ENCODE measurements at regions of chr1 and their contacts with region 1.

Region 1: DNA sequence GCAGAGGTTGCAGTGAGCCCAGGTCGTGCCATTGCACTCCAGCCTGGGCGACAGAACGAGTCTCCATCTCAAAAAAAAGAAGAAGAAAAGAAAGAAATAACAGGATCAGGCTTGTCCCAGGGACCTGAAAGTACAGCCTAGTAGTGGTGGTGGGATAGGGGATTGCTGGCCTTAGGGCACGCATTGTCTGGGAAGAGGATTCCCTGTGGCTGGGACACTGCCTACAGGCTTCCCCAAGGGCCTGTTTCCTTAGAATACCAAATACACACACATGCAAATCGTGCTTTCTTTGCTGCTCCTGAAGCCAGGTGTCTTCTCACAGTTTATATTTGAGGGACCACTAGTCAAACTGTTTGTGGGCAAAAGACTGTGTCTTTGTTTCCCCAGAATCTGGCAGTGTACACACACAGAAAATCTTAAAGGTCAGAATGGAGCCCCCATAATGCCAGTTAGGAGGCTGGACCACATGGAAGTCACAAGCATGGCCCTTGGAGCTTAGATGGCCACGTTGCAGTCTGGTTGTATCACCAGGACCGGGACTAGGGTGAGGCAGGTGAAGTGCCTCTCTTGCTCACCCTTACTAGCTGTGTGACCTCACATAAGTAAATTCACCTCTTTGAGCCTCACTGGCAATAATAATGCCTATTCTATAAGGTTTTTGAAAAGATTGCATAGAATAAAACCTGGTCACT is 12.7 kb upstream of the ASAP3 start:
- H3K4me3 Mint-ChIP-seq: no peak overlapping the region
- H3K27ac Mint-ChIP-seq: no peak overlapping the region
- H3K4me1 Mint-ChIP-seq: peaks cover 6% of the 10 kb centered on the region
- H3K27me3 Mint-ChIP-seq: peaks cover 29% of the 10 kb centered on the region

Region 2: DNA sequence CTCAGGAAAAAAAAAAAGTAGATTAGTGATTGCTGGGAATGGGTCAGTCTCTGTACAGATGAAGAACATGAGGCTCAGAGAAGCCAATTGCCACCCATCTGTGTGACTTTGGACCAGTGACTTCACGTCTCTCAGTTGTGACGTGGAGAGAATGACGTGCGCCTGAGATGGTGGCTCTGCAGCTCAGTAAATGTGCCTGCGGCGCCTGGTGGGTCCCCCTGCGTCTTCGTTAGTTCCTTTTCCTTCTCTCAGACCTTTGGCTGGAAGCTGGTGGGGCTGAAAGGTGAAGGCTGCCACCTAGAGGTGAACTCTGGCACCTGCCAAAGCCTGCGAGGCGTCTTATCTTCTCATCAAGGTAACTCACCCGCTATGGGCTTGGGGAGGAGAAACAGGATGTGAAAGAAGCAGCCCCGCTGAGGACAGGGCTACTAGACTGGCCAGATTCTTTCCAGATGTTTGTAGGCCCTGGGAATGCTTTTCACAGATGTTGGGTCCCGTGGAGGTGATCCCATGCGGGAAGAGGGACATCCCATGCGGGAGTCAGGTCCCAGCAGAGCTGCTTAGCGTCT is 43.1 kb after region 1 on chr1:
- intact Hi-C with region 1: loop called (anchors 1 kb)
- H3K4me3 Mint-ChIP-seq: no peak overlapping the region
- H3K27ac Mint-ChIP-seq: no peak overlapping the region
- H3K4me1 Mint-ChIP-seq: peaks cover 31% of the 10 kb centered on the region
- H3K27me3 Mint-ChIP-seq: peaks cover 11% of the 10 kb centered on the region

Region 3: GRCh38 chr1:23634842-23635651 is 138.4 kb after region 1 on chr1:
- intact Hi-C with region 1: loop called (anchors 5 kb)
- H3K4me3 Mint-ChIP-seq: peak overlapping the region; percentile 61
- H3K27ac Mint-ChIP-seq: peak overlapping the region; percentile 36
- H3K4me1 Mint-ChIP-seq: peaks cover 24% of the 10 kb centered on the region
- H3K27me3 Mint-ChIP-seq: peaks cover 48% of the 10 kb centered on the region

Region 4: GRCh38 chr1:23718482-23718881 is 221.8 kb after region 1 on chr1:
- intact Hi-C with region 1: no loop called
- H3K4me3 Mint-ChIP-seq: no peak overlapping the region
- H3K27ac Mint-ChIP-seq: no peak overlapping the region
- H3K4me1 Mint-ChIP-seq: peaks cover 15% of the 10 kb centered on the region
- H3K27me3 Mint-ChIP-seq: no peaks in the 10 kb centered on the region

Region 5: DNA sequence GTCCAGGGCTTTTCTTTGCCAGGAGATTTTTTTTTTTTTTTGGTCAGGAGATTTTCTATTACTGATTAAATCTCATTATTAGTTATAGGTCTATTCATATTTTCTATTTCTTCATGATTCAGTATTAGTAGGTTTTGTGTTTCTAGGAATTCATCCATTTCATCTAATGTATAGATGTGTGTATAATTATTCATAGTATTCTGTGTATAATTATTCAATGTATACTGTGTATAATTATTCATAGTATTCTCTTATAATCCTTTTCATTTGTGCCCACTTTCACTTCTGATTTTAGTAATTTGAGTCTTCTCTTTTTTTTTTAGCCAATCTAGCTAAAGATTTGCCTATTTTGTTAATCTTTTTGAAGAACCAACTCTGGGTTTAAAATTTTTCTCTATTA is 450.7 kb after region 1 on chr1:
- intact Hi-C with region 1: no loop called
- H3K4me3 Mint-ChIP-seq: no peak overlapping the region
- H3K27ac Mint-ChIP-seq: no peak overlapping the region
- H3K4me1 Mint-ChIP-seq: no peaks in the 10 kb centered on the region
- H3K27me3 Mint-ChIP-seq: peaks cover 1% of the 10 kb centered on the region

Measured in dendritic cell treated with granulocyte-macrophage colony-stimulating factor and Interleukin-4, amounts not matched to agents 40 ng/mL and 50 ng/mL, for 4 days (primary cell).